HepG2 (cell line): ENCODE measurements at regions of chr6 and their contacts with region 1.

Region 1: GRCh38 chr6:111591104-111591900 is 14.4 kb downstream of the TRAF3IP2 start:
- DNase-seq: peak; percentile 88
- ATAC-seq: peak; percentile 91
- H3K4me3 ChIP-seq: 0 out of 6 replicates have a peak overlapping the region, but pooled peaks of 1 of the 3 experiments have one; percentile 5
- H3K27ac ChIP-seq: no peak overlapping the region
- H3K4me1 ChIP-seq: peaks cover 40% of the 10 kb centered on the region
- H3K27me3 ChIP-seq: no peaks in the 10 kb centered on the region
- CTCF ChIP-seq: peak; percentile 30; the same call in 1 of the 2 replicates
- EP300 ChIP-seq: peak; percentile 60 to 75; a peak in 3 of 4 replicates
- POLR2A ChIP-seq: no peak
- RAD21 ChIP-seq: no peak

Region 2: GRCh38 chr6:111207141-111207850 is 384.0 kb before region 1 on chr6:
- CTCF ChIA-PET with region 1: no interaction called
- POLR2A ChIA-PET with region 1: no interaction called
- in situ Hi-C with region 1: no loop called
- intact Hi-C with region 1: no loop called
- DNase-seq: no peak
- ATAC-seq: no peak
- H3K4me3 ChIP-seq: no peak overlapping the region
- H3K27ac ChIP-seq: no peak overlapping the region
- H3K4me1 ChIP-seq: peaks cover 11% of the 10 kb centered on the region
- H3K27me3 ChIP-seq: no peaks in the 10 kb centered on the region
- CTCF ChIP-seq: no peak
- EP300 ChIP-seq: no peak
- POLR2A ChIP-seq: no peak
- RAD21 ChIP-seq: no peak

Region 3: GRCh38 chr6:111605100-111605751 is 13.9 kb after region 1 on chr6:
- CTCF ChIA-PET with region 1: no interaction called
- POLR2A ChIA-PET with region 1: interaction called, 7 read pairs
- in situ Hi-C with region 1: no loop called
- intact Hi-C with region 1: loop called (anchors 2 kb)
- DNase-seq: no peak
- ATAC-seq: peak; percentile 45
- H3K4me3 ChIP-seq: peak overlapping the region; percentile 72 to 93 (median 82)
- H3K27ac ChIP-seq: peak overlapping the region; percentile 66
- H3K4me1 ChIP-seq: peaks cover 78% of the 10 kb centered on the region
- H3K27me3 ChIP-seq: no peaks in the 10 kb centered on the region; a peak in 1 of 5 replicates
- CTCF ChIP-seq: no peak
- EP300 ChIP-seq: no peak
- POLR2A ChIP-seq: no peak
- RAD21 ChIP-seq: no peak